PC-9 (cell line): ENCODE measurements at regions of chr15 and their contacts with region 1.

Region 1: GRCh38 chr15:68252925-68253534 is 23.5 kb upstream of the CLN6 start:
- DNase-seq: peak; percentile 46 to 76
- H3K4me3 ChIP-seq: no peak overlapping the region
- H3K27ac ChIP-seq: no peak overlapping the region
- H3K4me1 ChIP-seq: no peaks in the 10 kb centered on the region
- H3K27me3 ChIP-seq: no peaks in the 10 kb centered on the region
- CTCF ChIP-seq: peak; percentile 81

Region 2: DNA sequence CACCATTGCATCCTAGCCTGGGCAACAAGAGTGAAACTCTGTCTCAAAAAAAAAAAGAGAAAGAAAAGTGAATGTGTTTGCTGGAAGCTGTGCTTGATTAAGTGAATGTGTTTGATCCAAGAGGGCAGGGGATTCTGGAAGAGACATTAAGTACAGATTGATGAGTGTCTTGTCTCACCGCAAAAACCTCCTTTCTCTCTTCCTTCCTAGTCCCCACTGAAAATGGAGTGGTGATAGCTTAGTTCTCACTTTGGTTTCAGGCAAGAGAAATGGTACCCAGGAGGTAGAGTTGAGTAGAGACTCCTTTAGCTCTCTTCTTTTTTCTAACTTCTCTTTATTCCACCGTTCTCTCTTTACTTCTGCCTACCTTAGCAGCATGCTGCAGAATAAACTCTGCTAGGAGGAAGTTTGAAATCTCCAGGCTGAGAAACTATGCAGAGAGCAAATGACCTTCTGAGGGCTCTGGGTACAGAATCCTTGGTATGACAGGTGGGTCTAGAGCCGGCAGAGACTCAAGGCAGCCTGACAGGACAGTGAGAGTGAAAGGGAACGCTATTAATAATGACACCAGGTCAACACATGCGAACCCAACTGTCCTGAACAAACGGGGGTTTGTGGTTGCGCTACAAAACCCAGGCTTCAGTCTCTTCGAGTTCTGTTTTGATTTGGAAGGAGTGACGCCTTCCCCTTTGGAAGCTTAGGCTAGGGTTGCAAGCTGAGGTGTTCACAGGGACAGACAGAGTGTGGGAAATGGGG is 1112.8 kb before region 1 on chr15:
- CTCF ChIA-PET with region 1: no interaction called
- POLR2A ChIA-PET with region 1: no interaction called
- intact Hi-C with region 1: no loop called
- DNase-seq: no peak
- H3K4me3 ChIP-seq: no peak overlapping the region
- H3K27ac ChIP-seq: peak overlapping the region; percentile 26; the same call in 1 of the 2 replicates
- H3K4me1 ChIP-seq: peaks cover 37% of the 10 kb centered on the region
- H3K27me3 ChIP-seq: no peaks in the 10 kb centered on the region
- CTCF ChIP-seq: no peak

Region 3: GRCh38 chr15:68277603-68278344 is 24.7 kb after region 1 on chr15 and contains the start of gene FEM1B:
- CTCF ChIA-PET with region 1: interaction called, 7 read pairs
- POLR2A ChIA-PET with region 1: no interaction called
- intact Hi-C with region 1: loop called (anchors 1 kb)
- DNase-seq: peak; percentile 68 to 87
- H3K4me3 ChIP-seq: peak within 1 kb of the TSS; percentile 97
- H3K27ac ChIP-seq: peak within 1 kb of the TSS; percentile 97
- H3K4me1 ChIP-seq: peaks cover 79% of the 10 kb centered on the region
- H3K27me3 ChIP-seq: no peaks in the 10 kb centered on the region
- CTCF ChIP-seq: no peak
- total RNA-seq, gene FEM1B: 26.3 and 31.6 TPM in 2 replicates

Region 4: DNA sequence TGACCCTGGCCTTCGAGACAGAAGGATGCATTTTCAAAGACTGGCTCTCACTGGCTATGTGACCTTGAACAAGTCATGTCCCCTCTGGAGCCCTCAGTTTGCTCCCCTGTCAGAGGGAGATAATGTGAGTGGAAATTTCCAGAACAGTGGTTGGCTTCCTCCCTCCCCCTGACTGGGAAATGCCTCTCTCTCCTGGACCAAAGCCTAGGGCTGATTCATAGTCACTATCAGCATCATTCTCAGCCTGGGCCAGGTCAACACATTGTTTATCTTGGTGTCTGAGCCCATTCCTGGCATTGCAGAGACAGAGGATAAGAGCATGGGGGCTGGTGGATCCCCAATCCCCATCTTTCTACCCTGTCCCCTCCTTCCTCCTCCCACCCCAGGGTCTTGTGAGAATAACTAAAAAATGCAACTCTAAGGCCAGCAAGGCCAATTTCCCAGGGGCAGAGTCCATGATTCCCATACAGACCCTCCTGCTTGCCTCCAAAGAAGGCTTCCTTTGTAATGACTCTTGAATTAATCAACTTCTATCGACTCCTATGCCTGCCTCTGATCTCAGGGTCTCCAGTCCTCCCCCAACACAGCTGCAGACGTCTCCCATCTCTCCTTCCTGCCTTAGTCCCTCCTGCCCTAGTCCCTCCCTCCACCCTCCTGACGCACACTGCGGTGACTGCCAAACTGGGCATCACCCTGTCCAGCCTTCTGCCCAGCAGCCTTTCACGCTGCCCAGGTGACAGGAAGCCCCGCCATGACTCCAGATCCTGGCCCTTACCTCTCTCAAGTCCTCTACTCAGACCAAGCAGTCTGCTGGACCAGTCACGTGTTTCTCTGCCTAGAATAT is 290.4 kb after region 1 on chr15:
- CTCF ChIA-PET with region 1: interaction called, 10 read pairs
- POLR2A ChIA-PET with region 1: no interaction called
- intact Hi-C with region 1: no loop called
- DNase-seq: no peak
- H3K4me3 ChIP-seq: no peak overlapping the region
- H3K27ac ChIP-seq: no peak overlapping the region
- H3K4me1 ChIP-seq: no peaks in the 10 kb centered on the region
- H3K27me3 ChIP-seq: no peaks in the 10 kb centered on the region
- CTCF ChIP-seq: no peak

Region 5: GRCh38 chr15:68672781-68673205 is 419.8 kb after region 1 on chr15:
- CTCF ChIA-PET with region 1: interaction called, 3 read pairs
- POLR2A ChIA-PET with region 1: no interaction called
- intact Hi-C with region 1: loop called (anchors 2 kb)
- DNase-seq: no peak
- H3K4me3 ChIP-seq: no peak overlapping the region
- H3K27ac ChIP-seq: no peak overlapping the region
- H3K4me1 ChIP-seq: no peaks in the 10 kb centered on the region
- H3K27me3 ChIP-seq: no peaks in the 10 kb centered on the region
- CTCF ChIP-seq: 0 out of 2 replicates have a peak, but pooled peaks have one; percentile 23

Region 6: GRCh38 chr15:68924866-68925560 is 672.0 kb after region 1 on chr15:
- CTCF ChIA-PET with region 1: no interaction called
- POLR2A ChIA-PET with region 1: no interaction called
- intact Hi-C with region 1: loop called (anchors 5 kb)
- DNase-seq: peak; percentile 48 to 77
- H3K4me3 ChIP-seq: no peak overlapping the region
- H3K27ac ChIP-seq: no peak overlapping the region
- H3K4me1 ChIP-seq: no peaks in the 10 kb centered on the region
- H3K27me3 ChIP-seq: no peaks in the 10 kb centered on the region
- CTCF ChIP-seq: peak; percentile 86